ENCODE measurements at regions of chr5 and their contacts with region 1.

Region 1: GRCh38 chr5:90434116-90434714 is 24.7 kb upstream of the CETN3 start:
- DNase-seq: peak; percentile 34
- ATAC-seq: peak; percentile 36
- H3K4me3 ChIP-seq: no peak overlapping the region
- H3K4me3 Mint-ChIP-seq: no peak overlapping the region
- H3K27ac ChIP-seq: no peak overlapping the region
- H3K27ac Mint-ChIP-seq: no peak overlapping the region
- H3K4me1 ChIP-seq: no peaks in the 10 kb centered on the region
- H3K4me1 Mint-ChIP-seq: no peaks in the 10 kb centered on the region
- H3K27me3 ChIP-seq: no peaks in the 10 kb centered on the region
- H3K27me3 Mint-ChIP-seq: peaks cover 4% of the 10 kb centered on the region
- CTCF ChIP-seq: peak; percentile 56

Region 2: GRCh38 chr5:90379652-90380051 is 54.6 kb before region 1 on chr5:
- CTCF ChIA-PET with region 1: no interaction called
- POLR2A ChIA-PET with region 1: no interaction called
- intact Hi-C with region 1: no loop called
- DNase-seq: no peak
- ATAC-seq: no peak
- H3K4me3 ChIP-seq: no peak overlapping the region
- H3K4me3 Mint-ChIP-seq: no peak overlapping the region
- H3K27ac ChIP-seq: no peak overlapping the region
- H3K27ac Mint-ChIP-seq: no peak overlapping the region
- H3K4me1 ChIP-seq: no peaks in the 10 kb centered on the region
- H3K4me1 Mint-ChIP-seq: no peaks in the 10 kb centered on the region
- H3K27me3 ChIP-seq: peaks cover 0 to 3% (median 0%) of the 10 kb centered on the region in 4 experiments
- H3K27me3 Mint-ChIP-seq: peaks cover 10% of the 10 kb centered on the region
- CTCF ChIP-seq: no peak

Region 3: GRCh38 chr5:90409318-90410177 is 24.7 kb before region 1 on chr5 and contains the start of gene CETN3:
- CTCF ChIA-PET with region 1: interaction called, 12 read pairs
- POLR2A ChIA-PET with region 1: no interaction called
- intact Hi-C with region 1: no loop called
- DNase-seq: peak; percentile 95
- ATAC-seq: peak; percentile 92
- H3K4me3 ChIP-seq: peak within 1 kb of the TSS; percentile 93 to 100 (median 98)
- H3K4me3 Mint-ChIP-seq: no peak within 1 kb of the TSS
- H3K27ac ChIP-seq: peak within 1 kb of the TSS; percentile 91 to 94
- H3K27ac Mint-ChIP-seq: no peak within 1 kb of the TSS
- H3K4me1 ChIP-seq: peaks cover 11 to 12% of the 10 kb centered on the region in 2 donors
- H3K4me1 Mint-ChIP-seq: peaks cover 5% of the 10 kb centered on the region
- H3K27me3 ChIP-seq: no peaks in the 10 kb centered on the region
- H3K27me3 Mint-ChIP-seq: no peaks in the 10 kb centered on the region
- CTCF ChIP-seq: no peak
- total RNA-seq, gene CETN3: 17.0 and 18.0 TPM in 2 replicates

Region 4: DNA sequence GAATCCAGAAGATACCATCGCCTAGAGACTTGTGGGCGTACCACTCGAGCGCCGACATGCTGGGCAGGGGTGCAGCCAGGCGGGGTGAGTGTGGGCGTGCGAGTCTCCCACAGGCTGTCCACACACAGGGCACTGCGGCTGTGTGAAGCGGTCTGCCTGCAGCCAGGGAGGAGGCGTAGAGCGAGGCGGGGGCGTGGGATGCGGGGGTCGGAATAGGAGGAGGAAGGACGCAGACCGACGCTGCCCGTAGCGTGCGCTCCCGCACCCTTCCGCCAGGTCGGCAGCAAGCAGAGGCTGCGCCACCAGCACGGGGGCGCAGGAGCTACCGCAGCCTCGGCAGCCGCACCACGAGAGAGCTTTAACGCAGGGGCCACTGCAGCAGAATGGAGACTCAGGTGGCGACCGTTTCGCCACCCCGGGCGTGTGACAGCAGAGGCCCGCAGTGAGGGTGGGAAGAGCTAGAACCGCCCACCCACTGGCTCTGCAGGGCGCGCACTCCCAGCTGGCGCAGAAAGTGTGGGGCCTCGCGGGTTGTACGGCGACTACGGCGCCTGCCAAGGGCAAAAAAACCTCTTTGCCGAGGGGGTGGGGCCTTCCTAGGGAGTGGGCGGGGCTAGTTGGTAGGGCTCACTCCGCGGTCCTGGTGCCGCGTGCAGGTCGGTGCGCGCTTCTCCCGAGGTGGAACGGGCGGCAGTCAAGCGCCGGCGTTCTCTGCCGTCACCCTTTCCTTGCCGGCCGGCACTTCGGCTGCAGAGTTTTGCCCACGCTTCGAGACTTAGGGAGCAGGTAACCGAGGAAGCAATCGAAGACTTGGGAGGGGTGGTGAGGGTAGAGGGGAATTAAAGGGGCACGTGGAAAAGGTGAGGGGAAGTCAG is 40.3 kb after region 1 on chr5 and contains the starts of genes MBLAC2 and POLR3G:
- CTCF ChIA-PET with region 1: interaction called, 7 read pairs
- POLR2A ChIA-PET with region 1: no interaction called
- intact Hi-C with region 1: loop called (anchors 1 kb)
- DNase-seq: peak; percentile 95
- ATAC-seq: peak; percentile 92
- H3K4me3 ChIP-seq: peak within 1 kb of the TSS; percentile 67 to 94 (median 86)
- H3K4me3 Mint-ChIP-seq: peak within 1 kb of the TSS; percentile 96
- H3K27ac ChIP-seq: peak within 1 kb of the TSS; percentile 53 to 55
- H3K27ac Mint-ChIP-seq: peak within 1 kb of the TSS; percentile 94
- H3K4me1 ChIP-seq: peaks cover 11 to 15% of the 10 kb centered on the region in 2 donors
- H3K4me1 Mint-ChIP-seq: peaks cover 24% of the 10 kb centered on the region
- H3K27me3 ChIP-seq: no peaks in the 10 kb centered on the region
- H3K27me3 Mint-ChIP-seq: no peaks in the 10 kb centered on the region
- CTCF ChIP-seq: peak; percentile 64
- total RNA-seq, gene MBLAC2: 11.5 and 13.3 TPM in 2 replicates
- total RNA-seq, gene POLR3G: 2.0 and 2.3 TPM in 2 replicates

Region 5: DNA sequence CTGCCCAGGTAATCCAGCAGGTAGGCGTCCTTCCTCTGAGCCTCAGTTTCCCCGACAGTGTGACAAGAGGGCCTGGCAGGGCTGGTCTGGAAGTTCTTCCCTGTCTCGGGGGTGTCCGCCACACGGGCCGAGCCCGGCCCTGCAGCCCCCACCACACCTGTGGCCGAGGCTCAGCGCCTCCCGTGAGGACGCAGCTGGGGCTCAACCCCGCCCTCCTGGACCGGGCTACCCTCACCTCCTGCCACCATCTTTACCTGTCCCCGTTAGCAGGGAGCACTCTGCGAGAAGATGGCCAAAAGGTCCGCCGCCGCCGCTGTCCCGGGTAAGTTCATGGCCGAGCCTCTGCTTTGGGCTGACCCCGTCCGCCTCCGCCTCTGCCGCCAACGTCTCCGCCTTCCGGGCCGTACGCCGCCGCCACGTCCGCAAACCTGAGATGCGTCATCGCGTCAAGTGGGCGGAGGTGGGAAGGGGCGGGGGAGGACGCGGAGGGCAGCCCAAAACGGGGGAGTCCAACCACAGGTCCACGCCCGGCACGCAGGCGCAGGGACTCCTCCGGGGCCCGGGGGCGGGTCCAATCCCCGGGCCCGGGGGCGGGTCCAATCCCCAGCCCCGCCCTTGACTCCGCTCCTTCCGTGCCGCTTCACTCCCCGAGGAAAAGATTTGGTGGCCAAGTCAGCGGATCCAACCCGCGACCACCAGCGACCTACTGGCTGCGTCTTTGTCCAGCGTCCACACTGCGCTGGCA is 95.2 kb after region 1 on chr5 and contains the start of gene LYSMD3:
- CTCF ChIA-PET with region 1: interaction called, 68 read pairs
- POLR2A ChIA-PET with region 1: interaction called, 7 read pairs
- intact Hi-C with region 1: loop called (anchors 1 kb)
- DNase-seq: peak; percentile 97
- ATAC-seq: peak; percentile 94
- H3K4me3 ChIP-seq: peak within 1 kb of the TSS; percentile 78 to 97 (median 83)
- H3K4me3 Mint-ChIP-seq: peak within 1 kb of the TSS; percentile 99
- H3K27ac ChIP-seq: peak within 1 kb of the TSS; percentile 88 to 94
- H3K27ac Mint-ChIP-seq: peak within 1 kb of the TSS; percentile 99
- H3K4me1 ChIP-seq: peaks cover 15 to 24% of the 10 kb centered on the region in 2 donors
- H3K4me1 Mint-ChIP-seq: peaks cover 36% of the 10 kb centered on the region
- H3K27me3 ChIP-seq: peaks cover 0 to 22% (median 15%) of the 10 kb centered on the region in 4 experiments
- H3K27me3 Mint-ChIP-seq: peaks cover 24% of the 10 kb centered on the region
- CTCF ChIP-seq: no peak
- total RNA-seq, gene LYSMD3: 23.7 and 25.2 TPM in 2 replicates

Region 6: GRCh38 chr5:90606539-90606938 is 172.3 kb after region 1 on chr5:
- CTCF ChIA-PET with region 1: interaction called, 6 read pairs
- POLR2A ChIA-PET with region 1: no interaction called
- intact Hi-C with region 1: loop called (anchors 1 kb)
- DNase-seq: no peak
- ATAC-seq: no peak
- H3K4me3 ChIP-seq: no peak overlapping the region
- H3K4me3 Mint-ChIP-seq: no peak overlapping the region
- H3K27ac ChIP-seq: no peak overlapping the region
- H3K27ac Mint-ChIP-seq: no peak overlapping the region
- H3K4me1 ChIP-seq: no peaks in the 10 kb centered on the region
- H3K4me1 Mint-ChIP-seq: no peaks in the 10 kb centered on the region
- H3K27me3 ChIP-seq: no peaks in the 10 kb centered on the region
- H3K27me3 Mint-ChIP-seq: peaks cover 18% of the 10 kb centered on the region
- CTCF ChIP-seq: no peak

Region 7: GRCh38 chr5:90783460-90784333 is 349.5 kb after region 1 on chr5:
- CTCF ChIA-PET with region 1: interaction called, 77 read pairs
- POLR2A ChIA-PET with region 1: no interaction called
- intact Hi-C with region 1: no loop called
- DNase-seq: peak; percentile 61
- ATAC-seq: peak; percentile 66
- H3K4me3 ChIP-seq: no peak overlapping the region
- H3K4me3 Mint-ChIP-seq: no peak overlapping the region
- H3K27ac ChIP-seq: no peak overlapping the region
- H3K27ac Mint-ChIP-seq: no peak overlapping the region
- H3K4me1 ChIP-seq: no peaks in the 10 kb centered on the region
- H3K4me1 Mint-ChIP-seq: no peaks in the 10 kb centered on the region
- H3K27me3 ChIP-seq: no peaks in the 10 kb centered on the region
- H3K27me3 Mint-ChIP-seq: peaks cover 4% of the 10 kb centered on the region
- CTCF ChIP-seq: peak; percentile 98